ENCODE measurements at regions of chr11 and their contacts with region 1.

Region 1: DNA sequence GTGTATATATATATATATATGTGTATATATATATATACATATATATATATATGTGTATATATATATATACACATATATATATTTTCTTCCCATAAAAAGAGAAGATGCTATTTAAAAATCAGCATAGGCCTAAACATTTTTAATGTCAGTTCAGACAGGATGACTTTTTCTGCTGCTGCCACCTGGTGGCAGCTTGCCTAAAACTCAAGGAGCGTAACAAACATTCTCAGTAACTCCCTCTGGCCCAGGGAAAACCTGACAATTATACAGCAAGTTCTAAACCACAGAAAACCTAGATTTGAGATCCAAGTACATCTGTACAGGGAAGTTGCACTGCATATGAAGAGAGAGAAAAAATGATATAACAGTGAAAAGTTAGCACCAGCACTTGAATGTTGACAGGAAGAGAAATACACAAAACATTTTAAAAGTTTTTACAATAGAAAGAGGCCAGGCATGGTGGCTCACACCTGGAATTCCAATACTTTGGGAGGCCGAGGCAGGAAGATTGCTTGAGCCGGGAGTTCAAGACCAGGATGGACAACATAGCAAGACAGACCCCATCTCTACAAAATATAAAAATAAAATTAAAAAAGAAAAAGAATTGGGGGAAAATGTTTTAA is 16.6 kb downstream of the OR8A1 start:
- DNase-seq: peak; percentile 36
- H3K4me3 Mint-ChIP-seq: no peak overlapping the region
- H3K27ac Mint-ChIP-seq: peak overlapping the region; percentile 38
- H3K4me1 Mint-ChIP-seq: no peaks in the 10 kb centered on the region
- H3K27me3 Mint-ChIP-seq: peaks cover 50% of the 10 kb centered on the region
- CTCF ChIP-seq: peak; percentile 40

Region 2: DNA sequence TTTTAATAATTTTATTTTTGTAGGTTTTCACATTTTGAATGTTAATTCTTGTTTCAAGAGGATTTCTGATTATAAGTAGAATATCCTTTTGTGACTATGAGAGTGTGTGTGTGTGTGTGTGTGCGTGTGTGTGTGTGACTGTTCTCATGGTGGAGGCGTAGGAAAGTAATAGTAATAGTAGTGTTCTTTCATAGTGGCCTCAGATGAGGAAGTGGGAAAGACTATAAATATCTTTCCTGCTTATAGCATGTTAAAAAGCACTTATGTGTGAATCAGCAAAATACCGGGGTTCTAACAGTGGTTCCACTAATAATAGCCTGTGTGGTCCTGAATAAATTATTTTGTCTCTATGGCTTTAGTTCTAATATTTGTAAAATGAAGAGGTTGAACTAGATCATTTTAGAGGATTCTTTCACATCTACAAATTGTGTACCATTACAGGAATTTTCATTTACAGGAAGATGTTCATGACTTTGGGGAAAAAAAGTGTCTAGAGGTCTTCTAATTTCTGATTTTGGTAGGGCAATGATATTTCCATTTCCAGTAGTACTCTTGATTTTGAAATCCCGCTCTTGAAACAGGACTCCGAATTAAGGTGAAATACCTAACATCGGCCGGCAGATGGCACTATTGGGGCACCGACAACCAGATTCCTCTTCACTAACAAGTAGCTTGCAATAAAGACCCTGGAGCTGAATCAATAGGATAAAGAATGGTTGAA is 515.3 kb before region 1 on chr11:
- CTCF ChIA-PET with region 1: no interaction called
- intact Hi-C with region 1: loop called (anchors 2 kb)
- DNase-seq: peak; percentile 54
- H3K4me3 Mint-ChIP-seq: no peak overlapping the region
- H3K27ac Mint-ChIP-seq: no peak overlapping the region
- H3K4me1 Mint-ChIP-seq: no peaks in the 10 kb centered on the region
- H3K27me3 Mint-ChIP-seq: peaks cover 30% of the 10 kb centered on the region
- CTCF ChIP-seq: no peak

Region 3: GRCh38 chr11:124402326-124402922 is 183.9 kb before region 1 on chr11:
- CTCF ChIA-PET with region 1: interaction called, 3 read pairs
- intact Hi-C with region 1: loop called (anchors 1 kb)
- DNase-seq: peak; percentile 68
- H3K4me3 Mint-ChIP-seq: no peak overlapping the region
- H3K27ac Mint-ChIP-seq: no peak overlapping the region
- H3K4me1 Mint-ChIP-seq: no peaks in the 10 kb centered on the region
- H3K27me3 Mint-ChIP-seq: no peaks in the 10 kb centered on the region
- CTCF ChIP-seq: no peak

Region 4: DNA sequence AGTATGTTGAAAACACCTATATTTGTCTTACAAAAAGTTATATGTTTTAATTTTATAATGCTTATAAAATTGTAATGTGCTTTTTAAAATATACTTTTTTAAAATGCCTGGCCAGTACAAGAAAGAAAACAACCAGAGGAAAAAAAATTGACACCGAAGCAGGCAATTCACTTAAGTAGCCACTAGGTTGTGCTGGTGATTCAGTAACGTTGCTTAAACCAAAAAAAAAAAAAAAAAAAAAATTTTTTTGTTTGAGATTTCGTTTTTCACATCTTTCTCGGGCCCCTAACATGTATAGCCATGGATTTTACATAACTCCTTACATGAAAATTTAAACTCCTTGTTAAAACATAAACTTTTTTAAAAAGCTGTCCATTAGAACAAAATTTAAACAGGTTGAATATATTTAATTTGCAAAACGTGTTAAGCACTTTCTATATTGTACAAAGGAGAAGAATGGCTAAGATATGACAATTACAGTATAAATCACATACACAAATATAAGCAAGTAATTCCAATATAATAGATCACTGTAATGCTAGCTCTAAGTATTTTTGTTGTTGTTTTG is 170.9 kb before region 1 on chr11:
- CTCF ChIA-PET with region 1: no interaction called
- intact Hi-C with region 1: loop called (anchors 5 kb)
- DNase-seq: no peak
- H3K4me3 Mint-ChIP-seq: no peak overlapping the region
- H3K27ac Mint-ChIP-seq: no peak overlapping the region
- H3K4me1 Mint-ChIP-seq: no peaks in the 10 kb centered on the region
- H3K27me3 Mint-ChIP-seq: peaks cover 14% of the 10 kb centered on the region
- CTCF ChIP-seq: no peak

Measured in Calu3 (cell line).